ENCODE measurements at regions of chr1 and their contacts with region 1.

Region 1: GRCh38 chr1:95138223-95138622 is 21.1 kb downstream of the TLCD4 start:
- DNase-seq: no peak
- ATAC-seq: no peak
- H3K4me3 ChIP-seq: no peak overlapping the region
- H3K27ac ChIP-seq: no peak overlapping the region
- H3K4me1 ChIP-seq: no peaks in the 10 kb centered on the region
- H3K27me3 ChIP-seq: no peaks in the 10 kb centered on the region
- CTCF ChIP-seq: no peak

Region 2: DNA sequence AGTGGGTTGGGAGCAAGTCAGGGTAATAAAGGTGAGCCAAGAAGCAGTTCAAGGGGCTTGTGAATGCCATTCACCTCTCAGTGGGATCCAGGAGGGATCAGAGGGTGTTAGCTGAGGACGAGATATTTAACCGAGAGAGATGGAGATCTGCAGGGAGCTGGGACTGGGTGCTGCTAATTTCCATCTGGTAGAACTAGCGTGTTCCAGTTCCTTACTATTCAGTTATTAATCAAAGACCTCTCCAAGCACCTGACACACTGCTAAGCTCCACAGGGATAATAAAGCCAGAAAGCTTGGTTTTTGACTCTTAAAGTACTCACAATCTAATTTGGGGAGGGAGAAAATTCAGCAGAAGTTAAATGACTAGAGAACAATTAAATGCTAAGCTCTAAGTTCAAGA is 123.1 kb before region 1 on chr1:
- CTCF ChIA-PET with region 1: no interaction called
- POLR2A ChIA-PET with region 1: interaction called, 11 read pairs
- in situ Hi-C with region 1: no loop called
- intact Hi-C with region 1: no loop called
- DNase-seq: no peak
- ATAC-seq: no peak
- H3K4me3 ChIP-seq: no peak overlapping the region
- H3K27ac ChIP-seq: no peak overlapping the region
- H3K4me1 ChIP-seq: no peaks in the 10 kb centered on the region
- H3K27me3 ChIP-seq: no peaks in the 10 kb centered on the region
- CTCF ChIP-seq: no peak

Measured in Panc1 (cell line).